CD4-positive, alpha-beta memory T cell (primary cell): ENCODE measurements at regions of chr12 and their contacts with region 1.

Region 1: GRCh38 chr12:64571411-64571810 is 38.9 kb upstream of the RASSF3 start:
- DNase-seq: peak in 4 of 5 donors; percentile 6 to 22 (median 12)
- H3K4me3 ChIP-seq: no peak overlapping the region
- H3K4me3 Mint-ChIP-seq: peak overlapping the region in 2 of 8 donors; percentile 29 to 41
- H3K27ac ChIP-seq: no peak overlapping the region
- H3K27ac Mint-ChIP-seq: peak overlapping the region in 5 of 7 donors; percentile 19 to 87 (median 55)
- H3K4me1 ChIP-seq: peaks cover 25% of the 10 kb centered on the region
- H3K4me1 Mint-ChIP-seq: peaks cover 26 to 55% (median 41%) of the 10 kb centered on the region in 4 donors
- H3K27me3 ChIP-seq: no peaks in the 10 kb centered on the region
- H3K27me3 Mint-ChIP-seq: no peaks in the 10 kb centered on the region

Region 2: DNA sequence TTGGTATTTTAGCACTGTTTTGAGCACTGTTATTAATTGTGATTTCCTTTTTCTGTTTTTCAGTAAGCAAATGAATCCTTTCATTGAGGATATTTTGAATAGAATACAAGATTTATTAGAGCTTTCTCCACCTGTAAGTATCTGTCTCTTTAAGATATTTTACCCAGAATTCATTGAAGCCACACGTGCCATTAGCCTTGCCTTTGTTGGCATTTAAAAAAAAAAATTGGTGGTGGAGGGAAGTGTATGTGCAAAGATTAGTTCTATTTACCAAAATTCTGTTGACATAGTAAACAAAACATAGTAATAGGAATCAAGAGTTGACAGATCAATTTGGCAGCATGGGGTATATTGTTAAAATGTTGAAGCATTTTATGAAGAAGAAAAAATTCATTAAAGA is 143.4 kb before region 1 on chr12:
- CTCF ChIA-PET with region 1: no interaction called
- POLR2A ChIA-PET with region 1: no interaction called
- intact Hi-C with region 1: no loop called
- DNase-seq: no peak
- H3K4me3 ChIP-seq: no peak overlapping the region
- H3K4me3 Mint-ChIP-seq: no peak overlapping the region
- H3K27ac ChIP-seq: no peak overlapping the region
- H3K27ac Mint-ChIP-seq: peak overlapping the region in 1 of 7 donors; percentile 3
- H3K4me1 ChIP-seq: no peaks in the 10 kb centered on the region
- H3K4me1 Mint-ChIP-seq: peaks cover 0 to 1% (median 0%) of the 10 kb centered on the region in 4 donors
- H3K27me3 ChIP-seq: no peaks in the 10 kb centered on the region
- H3K27me3 Mint-ChIP-seq: no peaks in the 10 kb centered on the region

Region 3: DNA sequence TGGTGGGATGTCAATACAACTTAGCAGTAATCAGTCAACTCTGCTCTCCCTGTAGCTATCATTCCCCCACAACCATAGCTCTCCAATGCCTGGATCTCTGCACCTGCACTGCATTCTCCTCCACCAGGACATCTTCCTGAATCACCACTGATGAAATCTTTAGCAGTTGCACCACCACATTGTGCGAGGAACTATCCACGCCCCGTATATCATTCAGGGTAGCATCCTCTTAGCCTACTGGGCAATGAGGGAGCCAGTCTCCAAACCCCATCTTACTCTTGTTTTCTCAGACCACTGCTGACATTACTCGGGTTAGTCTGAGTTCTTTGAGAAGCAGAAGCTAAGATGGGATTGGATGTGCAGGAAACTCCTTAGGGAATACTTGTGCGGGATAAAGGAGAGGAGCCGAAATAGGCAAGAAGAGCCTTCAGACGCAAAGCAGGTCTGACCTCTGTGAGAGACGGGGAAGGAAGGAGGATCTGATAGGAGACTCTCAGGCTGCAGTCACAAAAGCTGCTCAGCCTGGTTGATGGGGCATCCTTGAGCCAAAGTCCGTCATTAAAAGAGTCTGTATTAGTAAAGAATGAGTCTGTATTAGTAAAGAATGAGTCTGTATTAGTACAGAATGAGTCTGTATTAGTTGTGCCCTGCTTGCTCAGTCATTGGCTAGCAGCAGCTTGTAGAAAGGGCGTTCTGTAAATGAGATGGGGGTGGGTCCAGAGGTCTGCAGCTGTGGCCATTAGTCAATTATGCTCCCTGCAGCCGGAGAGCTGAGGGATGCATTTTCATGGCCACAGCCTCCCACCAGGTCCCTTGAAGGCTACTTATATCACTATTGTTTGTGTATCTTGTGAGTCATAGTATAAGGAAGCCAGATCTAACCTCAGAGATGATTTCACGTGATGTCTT is 10.8 kb before region 1 on chr12:
- CTCF ChIA-PET with region 1: interaction called, 3 read pairs
- POLR2A ChIA-PET with region 1: interaction called, 25 read pairs
- intact Hi-C with region 1: no loop called
- DNase-seq: no peak
- H3K4me3 ChIP-seq: no peak overlapping the region
- H3K4me3 Mint-ChIP-seq: no peak overlapping the region
- H3K27ac ChIP-seq: no peak overlapping the region
- H3K27ac Mint-ChIP-seq: peak overlapping the region in 1 of 7 donors; percentile 44
- H3K4me1 ChIP-seq: no peaks in the 10 kb centered on the region
- H3K4me1 Mint-ChIP-seq: peaks cover 0 to 8% (median 8%) of the 10 kb centered on the region in 4 donors
- H3K27me3 ChIP-seq: no peaks in the 10 kb centered on the region
- H3K27me3 Mint-ChIP-seq: peaks cover 0 to 2% of the 10 kb centered on the region in 2 donors

Region 4: DNA sequence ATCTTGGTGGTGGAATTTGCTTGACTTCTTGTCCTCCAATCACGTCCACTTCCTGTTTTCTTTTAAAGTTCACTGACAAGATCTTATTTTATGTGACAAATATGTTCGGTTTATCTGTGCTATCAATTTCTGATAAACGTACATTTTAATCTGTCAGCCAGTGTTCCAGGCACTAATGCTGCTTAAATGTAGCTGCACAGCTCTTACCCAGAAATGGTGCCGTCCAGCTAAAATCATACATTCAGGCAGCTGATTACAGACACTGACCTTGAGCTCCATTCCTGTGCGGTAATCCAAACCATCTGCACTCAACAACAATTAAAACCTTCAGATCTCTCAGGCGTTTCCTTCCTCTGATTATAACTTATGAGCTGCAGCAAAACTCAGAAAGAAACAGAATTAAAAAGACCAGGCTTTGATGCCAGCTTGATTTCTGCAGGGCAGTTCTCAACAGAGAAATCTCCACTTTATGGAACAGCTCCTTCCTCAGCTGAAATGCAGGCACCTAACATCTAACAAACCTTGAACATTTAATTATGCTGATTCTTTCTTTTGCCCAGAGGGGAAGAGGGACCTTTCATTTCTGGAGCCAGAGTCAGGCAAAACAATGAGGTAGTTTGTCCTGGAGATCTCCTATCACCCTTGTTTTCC is 12.5 kb after region 1 on chr12:
- CTCF ChIA-PET with region 1: interaction called, 4 read pairs
- POLR2A ChIA-PET with region 1: interaction called, 11 read pairs
- intact Hi-C with region 1: no loop called
- DNase-seq: peak in 4 of 5 donors; percentile 19 to 27 (median 24)
- H3K4me3 ChIP-seq: peak overlapping the region; percentile 36 to 55
- H3K4me3 Mint-ChIP-seq: peak overlapping the region; percentile 40 to 79 (median 74)
- H3K27ac ChIP-seq: peak overlapping the region; percentile 0
- H3K27ac Mint-ChIP-seq: peak overlapping the region; percentile 38 to 89 (median 75)
- H3K4me1 ChIP-seq: peaks cover 35% of the 10 kb centered on the region
- H3K4me1 Mint-ChIP-seq: peaks cover 21 to 40% (median 29%) of the 10 kb centered on the region in 4 donors
- H3K27me3 ChIP-seq: no peaks in the 10 kb centered on the region
- H3K27me3 Mint-ChIP-seq: no peaks in the 10 kb centered on the region